ENCODE measurements at regions of chr1 and their contacts with region 1.

Region 1: GRCh38 chr1:26431979-26432695 is at the start of gene DHDDS:
- DNase-seq: peak; percentile 99
- ATAC-seq: peak; percentile 98
- H3K4me3 Mint-ChIP-seq: peak within 1 kb of the TSS; percentile 97
- H3K27ac Mint-ChIP-seq: peak within 1 kb of the TSS; percentile 91
- H3K4me1 Mint-ChIP-seq: peaks cover 32% of the 10 kb centered on the region
- H3K27me3 Mint-ChIP-seq: peaks cover 13% of the 10 kb centered on the region
- total RNA-seq, gene DHDDS: 49.2 to 54.0 TPM

Region 2: DNA sequence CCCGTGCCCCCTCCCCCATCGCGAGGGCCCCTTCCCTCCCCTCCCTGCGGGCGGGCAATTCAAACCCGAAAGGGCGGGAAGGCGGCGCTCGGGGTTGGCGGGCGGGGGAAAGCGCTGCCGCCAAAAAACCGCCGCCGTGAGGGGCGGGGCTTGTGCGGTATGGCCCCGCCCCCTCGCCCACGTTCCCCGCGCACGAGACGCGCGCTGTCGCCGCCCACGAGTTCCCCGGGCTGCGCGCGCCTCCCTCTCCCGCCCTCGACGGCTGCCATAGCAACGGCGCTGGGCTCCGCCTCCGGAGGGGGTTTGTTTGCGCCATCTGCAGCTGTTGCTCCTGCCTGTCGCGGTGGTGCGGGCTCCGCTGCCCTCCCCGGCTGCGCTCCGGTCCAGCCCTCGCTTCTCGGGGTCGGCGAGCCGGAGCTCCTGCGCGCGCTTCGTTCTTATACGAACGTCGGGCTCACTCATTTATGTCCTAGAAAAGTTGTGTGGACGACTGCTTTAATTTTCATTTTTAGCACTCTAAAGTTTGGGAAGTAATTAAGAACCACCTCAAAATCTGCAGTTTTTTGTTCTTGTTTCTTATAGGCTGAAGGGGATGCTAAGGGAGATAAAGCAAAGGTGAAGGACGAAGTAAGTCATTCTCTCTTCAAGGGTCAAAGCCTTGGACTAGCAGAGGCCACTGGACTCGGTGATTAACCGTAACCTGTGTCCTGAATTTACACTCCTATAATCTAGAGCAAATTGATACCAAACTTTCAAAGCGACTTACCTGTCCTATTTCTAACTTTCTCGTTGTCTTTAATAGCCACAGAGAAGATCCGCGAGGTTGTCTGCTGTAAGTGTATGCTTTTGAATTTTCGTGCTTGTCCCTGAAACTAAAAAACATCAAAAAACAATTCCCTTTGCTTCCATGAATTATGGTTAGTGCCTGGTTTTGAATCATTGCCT is 41.0 kb after region 1 on chr1:
- CTCF ChIA-PET with region 1: interaction called, 11 read pairs
- DNase-seq: peak; percentile 97
- ATAC-seq: peak; percentile 74
- H3K4me3 Mint-ChIP-seq: peak overlapping the region; percentile 86
- H3K27ac Mint-ChIP-seq: peak overlapping the region; percentile 61
- H3K4me1 Mint-ChIP-seq: peaks cover 45% of the 10 kb centered on the region
- H3K27me3 Mint-ChIP-seq: no peaks in the 10 kb centered on the region